Activated CD4-positive, alpha-beta memory T cell treated with anti-CD3 and anti-CD28 coated beads for 36 hours (primary cell): ENCODE measurements at regions of chr5 and their contacts with region 1.

Region 1: GRCh38 chr5:103475629-103476240 is 86.9 kb downstream of the NUDT12 start:
- DNase-seq: no peak
- H3K4me3 Mint-ChIP-seq: no peak overlapping the region
- H3K27ac Mint-ChIP-seq: no peak overlapping the region
- H3K4me1 Mint-ChIP-seq: no peaks in the 10 kb centered on the region
- H3K27me3 Mint-ChIP-seq: peaks cover 11% of the 10 kb centered on the region

Region 2: DNA sequence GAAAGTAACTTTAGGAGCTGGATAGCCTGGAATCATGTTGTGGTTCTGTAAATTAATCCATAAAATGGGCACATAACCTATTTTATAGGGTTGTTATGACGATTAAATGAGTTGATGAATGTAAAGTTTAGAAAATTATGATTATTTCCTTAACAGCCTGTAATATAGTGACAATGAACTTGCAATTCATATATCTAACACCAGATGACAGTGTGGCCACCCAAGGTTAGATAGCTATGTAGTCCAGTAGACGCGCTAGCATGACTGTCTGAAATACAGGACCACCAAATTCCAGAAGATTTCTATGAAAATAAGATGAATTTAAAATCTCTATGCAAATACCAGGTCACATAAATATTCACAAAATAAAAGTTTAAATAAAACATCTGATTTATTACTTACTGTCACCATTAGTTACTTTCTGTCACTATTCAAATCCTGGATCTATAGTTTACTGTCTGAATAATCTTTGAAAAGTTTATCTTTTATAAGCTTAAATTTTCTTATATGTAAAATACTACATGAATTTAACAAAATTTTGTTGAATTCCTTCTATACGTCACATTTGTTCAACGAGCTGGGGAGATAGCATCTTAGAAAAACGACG is 243.2 kb before region 1 on chr5:
- CTCF ChIA-PET with region 1: interaction called, 43 read pairs
- POLR2A ChIA-PET with region 1: no interaction called
- intact Hi-C with region 1: loop called (anchors 1 kb)
- DNase-seq: no peak
- H3K4me3 Mint-ChIP-seq: no peak overlapping the region
- H3K27ac Mint-ChIP-seq: no peak overlapping the region
- H3K4me1 Mint-ChIP-seq: no peaks in the 10 kb centered on the region
- H3K27me3 Mint-ChIP-seq: peaks cover 9% of the 10 kb centered on the region

Region 3: GRCh38 chr5:103428411-103428871 is 47.3 kb before region 1 on chr5:
- CTCF ChIA-PET with region 1: no interaction called
- POLR2A ChIA-PET with region 1: no interaction called
- intact Hi-C with region 1: no loop called
- DNase-seq: no peak
- H3K4me3 Mint-ChIP-seq: no peak overlapping the region
- H3K27ac Mint-ChIP-seq: no peak overlapping the region
- H3K4me1 Mint-ChIP-seq: no peaks in the 10 kb centered on the region
- H3K27me3 Mint-ChIP-seq: peaks cover 2% of the 10 kb centered on the region